A549 (cell line): ENCODE measurements at regions of chr2 and their contacts with region 1.

Region 1: GRCh38 chr2:69012310-69013141 is 453 bp upstream of the ANTXR1 start:
- DNase-seq: peak; percentile 74 to 85
- ATAC-seq: peak; percentile 55 to 65
- H3K4me3 ChIP-seq: peak overlapping the region; percentile 85
- H3K27ac ChIP-seq: peak overlapping the region; percentile 90 to 95
- H3K4me1 ChIP-seq: peaks cover 35% of the 10 kb centered on the region
- CTCF ChIP-seq: peak; percentile 89
- EP300 ChIP-seq: peak in 1 of 2 experiments; percentile 31; a peak in 1 of 5 replicates
- POLR2A ChIP-seq: no peak
- RAD21 ChIP-seq: peak; percentile 80 to 96

Region 2: GRCh38 chr2:68789603-68790002 is 222.9 kb before region 1 on chr2:
- CTCF ChIA-PET with region 1: no interaction called
- POLR2A ChIA-PET with region 1: no interaction called
- DNase-seq: no peak
- ATAC-seq: no peak
- H3K4me3 ChIP-seq: no peak overlapping the region
- H3K27ac ChIP-seq: no peak overlapping the region
- H3K4me1 ChIP-seq: no peaks in the 10 kb centered on the region
- CTCF ChIP-seq: no peak
- EP300 ChIP-seq: no peak
- POLR2A ChIP-seq: no peak
- RAD21 ChIP-seq: no peak

Region 3: GRCh38 chr2:68951899-68952298 is 60.6 kb before region 1 on chr2:
- CTCF ChIA-PET with region 1: interaction called, 10 read pairs
- POLR2A ChIA-PET with region 1: no interaction called
- DNase-seq: no peak
- ATAC-seq: no peak
- H3K4me3 ChIP-seq: no peak overlapping the region
- H3K27ac ChIP-seq: peak overlapping the region in 1 of 2 experiments; percentile 9; a peak in 2 of 6 replicates
- H3K4me1 ChIP-seq: peaks cover 6% of the 10 kb centered on the region; the same call in 2 of the 3 replicates
- CTCF ChIP-seq: no peak
- EP300 ChIP-seq: no peak
- POLR2A ChIP-seq: no peak
- RAD21 ChIP-seq: no peak